ENCODE measurements at regions of chr12 and their contacts with region 1.

Region 1: GRCh38 chr12:111529424-111530368 is 69.4 kb downstream of the ATXN2 start:
- DNase-seq: peak; percentile 18
- H3K4me3 ChIP-seq: no peak overlapping the region
- H3K27ac ChIP-seq: no peak overlapping the region
- H3K27me3 ChIP-seq: no peaks in the 10 kb centered on the region
- CTCF ChIP-seq: peak; percentile 77

Region 2: DNA sequence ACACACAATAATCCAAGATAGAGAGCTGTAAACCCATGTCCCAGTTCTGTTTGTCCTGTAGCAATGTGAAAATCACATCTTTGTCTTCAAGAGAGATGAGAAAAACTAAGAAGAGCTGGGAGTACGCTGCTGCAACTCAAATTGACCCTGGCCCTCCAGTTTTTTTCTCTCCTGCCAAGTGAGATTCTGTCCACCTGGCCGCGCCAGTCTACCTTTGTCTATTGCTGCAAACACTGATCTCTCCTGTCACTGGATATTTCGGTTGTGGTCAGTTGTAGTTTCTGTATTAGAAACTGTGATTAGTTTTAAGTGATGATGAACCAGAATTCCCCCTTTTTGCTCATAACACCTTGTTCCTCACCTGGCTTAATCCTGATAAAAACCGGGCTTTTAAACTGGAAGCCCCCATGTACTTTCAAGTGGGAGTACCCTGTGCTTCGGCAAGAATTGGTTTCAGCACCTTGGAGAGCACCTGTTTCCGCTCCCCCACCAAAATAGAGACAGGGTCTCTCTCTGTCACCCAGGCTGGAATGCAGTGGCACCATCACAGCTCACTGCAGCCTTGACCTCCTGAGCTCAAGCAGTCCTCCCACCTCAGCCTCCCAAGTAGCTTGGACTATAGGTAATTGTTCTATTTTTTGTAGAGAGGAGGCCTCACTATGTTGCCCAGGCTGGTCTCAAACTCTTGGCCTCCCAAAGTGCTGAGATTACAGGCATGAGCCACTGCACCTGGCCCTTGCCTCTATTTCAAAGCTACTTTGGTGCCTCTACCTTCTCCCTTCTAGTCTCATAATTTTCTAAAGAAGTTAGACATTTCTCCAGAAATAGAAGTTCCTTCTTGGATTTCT is 317.6 kb before region 1 on chr12:
- CTCF ChIA-PET with region 1: no interaction called
- POLR2A ChIA-PET with region 1: no interaction called
- DNase-seq: no peak
- H3K4me3 ChIP-seq: no peak overlapping the region
- H3K27ac ChIP-seq: no peak overlapping the region
- H3K27me3 ChIP-seq: peaks cover 6% of the 10 kb centered on the region
- CTCF ChIP-seq: no peak

Region 3: GRCh38 chr12:111330800-111331752 is 198.6 kb before region 1 on chr12:
- CTCF ChIA-PET with region 1: no interaction called
- POLR2A ChIA-PET with region 1: interaction called, 10 read pairs
- DNase-seq: peak; percentile 3
- H3K4me3 ChIP-seq: no peak overlapping the region
- H3K27ac ChIP-seq: no peak overlapping the region
- H3K27me3 ChIP-seq: peaks cover 8% of the 10 kb centered on the region
- CTCF ChIP-seq: peak; percentile 45

Region 4: DNA sequence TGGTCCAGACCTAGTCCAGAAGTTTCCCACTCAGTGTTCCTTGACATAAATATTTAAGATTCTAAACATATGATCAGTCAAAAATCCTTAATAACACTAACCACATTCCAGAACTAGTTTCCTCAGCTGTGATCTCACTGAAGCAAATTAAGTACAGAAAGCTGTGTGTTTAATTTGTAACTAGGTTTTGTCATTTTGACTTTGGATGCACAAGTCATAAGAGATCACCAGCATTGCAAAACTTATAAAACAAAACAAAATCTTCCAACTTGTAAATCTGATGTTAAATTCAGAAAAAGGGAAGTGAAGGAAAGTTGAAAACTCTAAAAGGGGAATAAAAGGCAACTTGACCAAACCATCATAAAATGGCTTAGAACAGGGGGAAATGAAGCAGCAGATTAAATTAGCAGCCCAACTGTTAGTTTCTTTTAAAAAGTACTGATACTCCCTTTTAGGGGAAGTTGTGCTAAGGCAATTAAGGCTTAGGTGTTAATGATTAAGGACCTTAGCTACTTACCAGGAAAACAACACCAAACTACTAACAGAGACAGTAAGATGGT is 67.4 kb before region 1 on chr12:
- CTCF ChIA-PET with region 1: interaction called, 13 read pairs
- POLR2A ChIA-PET with region 1: no interaction called
- DNase-seq: peak; percentile 72
- H3K4me3 ChIP-seq: no peak overlapping the region
- H3K27ac ChIP-seq: peak overlapping the region; percentile 59
- H3K27me3 ChIP-seq: no peaks in the 10 kb centered on the region
- CTCF ChIP-seq: no peak